ENCODE measurements at regions of chr9 and their contacts with region 1.

Region 1: GRCh38 chr9:11312966-11313365 is 700.2 kb upstream of the PTPRD start:
- DNase-seq: no peak
- ATAC-seq: no peak
- H3K4me3 ChIP-seq: no peak overlapping the region
- H3K27ac ChIP-seq: no peak overlapping the region
- H3K4me1 ChIP-seq: no peaks in the 10 kb centered on the region
- H3K27me3 ChIP-seq: no peaks in the 10 kb centered on the region
- CTCF ChIP-seq: no peak
- POLR2A ChIP-seq: no peak
- RAD21 ChIP-seq: no peak

Region 2: GRCh38 chr9:11241779-11242178 is 71.2 kb before region 1 on chr9:
- CTCF ChIA-PET with region 1: no interaction called
- POLR2A ChIA-PET with region 1: no interaction called
- RAD21 ChIA-PET with region 1: no interaction called
- intact Hi-C with region 1: loop called (anchors 10 kb)
- DNase-seq: no peak
- ATAC-seq: no peak
- H3K4me3 ChIP-seq: no peak overlapping the region
- H3K27ac ChIP-seq: no peak overlapping the region
- H3K4me1 ChIP-seq: no peaks in the 10 kb centered on the region
- H3K27me3 ChIP-seq: no peaks in the 10 kb centered on the region
- CTCF ChIP-seq: no peak
- POLR2A ChIP-seq: no peak
- RAD21 ChIP-seq: no peak

Region 3: GRCh38 chr9:12494456-12494855 is 1181.5 kb after region 1 on chr9:
- CTCF ChIA-PET with region 1: no interaction called
- POLR2A ChIA-PET with region 1: no interaction called
- RAD21 ChIA-PET with region 1: no interaction called
- intact Hi-C with region 1: no loop called
- DNase-seq: no peak
- ATAC-seq: no peak
- H3K4me3 ChIP-seq: no peak overlapping the region
- H3K27ac ChIP-seq: no peak overlapping the region
- H3K4me1 ChIP-seq: no peaks in the 10 kb centered on the region
- H3K27me3 ChIP-seq: no peaks in the 10 kb centered on the region
- CTCF ChIP-seq: no peak
- POLR2A ChIP-seq: no peak
- RAD21 ChIP-seq: no peak

Measured in HCT116 (cell line).